ENCODE measurements at regions of chr4 and their contacts with region 1.

Region 1: GRCh38 chr4:139501927-139502899 is 48.3 kb downstream of the RAB33B start:
- DNase-seq: no peak
- ATAC-seq: no peak
- H3K4me3 ChIP-seq: no peak overlapping the region
- H3K4me3 Mint-ChIP-seq: no peak overlapping the region
- H3K27ac ChIP-seq: no peak overlapping the region
- H3K27ac Mint-ChIP-seq: no peak overlapping the region
- H3K4me1 ChIP-seq: no peaks in the 10 kb centered on the region
- H3K4me1 Mint-ChIP-seq: no peaks in the 10 kb centered on the region
- H3K27me3 ChIP-seq: no peaks in the 10 kb centered on the region
- H3K27me3 Mint-ChIP-seq: no peaks in the 10 kb centered on the region
- CTCF ChIP-seq: no peak

Region 2: DNA sequence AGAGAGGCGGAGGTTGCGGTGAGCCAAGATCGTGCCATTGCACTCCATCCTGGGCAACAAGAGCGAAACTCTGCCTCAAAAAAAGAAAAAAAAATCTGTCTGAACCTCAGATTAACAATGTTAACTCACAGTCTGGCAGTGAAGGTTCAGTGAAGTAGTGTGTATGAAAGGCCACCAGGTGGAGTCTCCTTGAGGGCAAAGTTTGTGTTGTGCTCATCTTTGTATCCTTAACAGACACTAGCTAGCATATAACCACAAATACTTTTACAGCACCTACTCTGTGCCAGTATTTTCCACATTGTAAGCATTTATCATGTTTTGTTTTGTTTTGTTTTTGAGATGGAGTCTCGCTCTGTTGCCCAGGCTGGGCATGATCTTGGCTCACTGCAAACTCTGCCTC is 117.4 kb after region 1 on chr4:
- CTCF ChIA-PET with region 1: no interaction called
- POLR2A ChIA-PET with region 1: no interaction called
- intact Hi-C with region 1: no loop called
- DNase-seq: peak; percentile 15
- ATAC-seq: no peak
- H3K4me3 ChIP-seq: no peak overlapping the region
- H3K4me3 Mint-ChIP-seq: no peak overlapping the region
- H3K27ac ChIP-seq: no peak overlapping the region
- H3K27ac Mint-ChIP-seq: no peak overlapping the region
- H3K4me1 ChIP-seq: no peaks in the 10 kb centered on the region
- H3K4me1 Mint-ChIP-seq: no peaks in the 10 kb centered on the region
- H3K27me3 ChIP-seq: no peaks in the 10 kb centered on the region
- H3K27me3 Mint-ChIP-seq: peaks cover 9% of the 10 kb centered on the region
- CTCF ChIP-seq: peak; percentile 57

Region 3: GRCh38 chr4:139651282-139652194 is 149.3 kb after region 1 on chr4:
- CTCF ChIA-PET with region 1: interaction called, 6 read pairs
- POLR2A ChIA-PET with region 1: no interaction called
- intact Hi-C with region 1: loop called (anchors 1 kb)
- DNase-seq: peak; percentile 82
- ATAC-seq: peak; percentile 81
- H3K4me3 ChIP-seq: no peak overlapping the region
- H3K4me3 Mint-ChIP-seq: no peak overlapping the region
- H3K27ac ChIP-seq: no peak overlapping the region
- H3K27ac Mint-ChIP-seq: no peak overlapping the region
- H3K4me1 ChIP-seq: no peaks in the 10 kb centered on the region
- H3K4me1 Mint-ChIP-seq: peaks cover 4% of the 10 kb centered on the region
- H3K27me3 ChIP-seq: no peaks in the 10 kb centered on the region
- H3K27me3 Mint-ChIP-seq: peaks cover 15% of the 10 kb centered on the region
- CTCF ChIP-seq: peak; percentile 98